ENCODE measurements at regions of chr17 and their contacts with region 1.

Region 1: DNA sequence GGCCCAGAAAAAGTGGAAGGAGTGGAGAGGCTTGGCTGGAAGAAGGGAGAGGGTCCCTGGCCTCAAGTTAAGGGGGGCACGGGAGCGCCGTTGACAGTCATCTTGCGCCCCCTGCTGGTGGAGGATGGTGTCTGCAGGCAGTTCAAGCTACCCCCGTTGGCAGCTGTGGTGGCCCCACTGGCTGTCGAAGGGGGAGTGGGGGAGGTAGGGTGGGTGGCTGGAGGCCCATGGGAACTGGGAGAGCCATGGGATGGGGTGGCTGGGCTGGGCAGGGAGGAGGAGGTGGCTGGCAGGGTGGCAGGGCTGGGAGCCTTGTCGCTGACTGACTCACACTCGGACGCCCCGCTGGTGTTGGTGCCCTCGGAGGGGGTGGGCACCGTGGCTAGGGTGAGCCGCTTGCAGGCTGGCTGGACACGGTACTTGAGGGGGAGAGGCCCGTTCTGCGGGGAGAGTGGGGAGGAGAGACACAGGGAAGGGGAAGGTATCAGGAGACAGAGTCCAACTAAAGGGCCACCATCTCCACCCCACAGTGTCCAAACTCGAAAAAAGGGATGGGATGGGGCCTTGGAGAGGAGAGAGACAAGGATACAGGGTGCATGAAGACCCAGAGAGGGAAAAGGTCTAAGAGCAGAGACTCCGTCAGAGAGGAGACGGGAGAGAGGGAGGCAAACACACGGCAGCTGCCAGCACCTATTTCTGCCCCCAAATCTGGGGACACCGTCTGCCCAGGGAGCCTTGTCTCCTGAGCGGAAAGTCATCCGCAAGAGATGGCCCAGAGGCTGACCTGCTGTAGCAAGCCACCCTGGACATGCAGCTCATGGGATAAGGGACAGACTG is 5.2 kb downstream of the CISD3 start:
- DNase-seq: peak; percentile 50 to 93
- ATAC-seq: peak in 1 of 2 experiments; percentile 32; a peak in 3 of 6 replicates
- H3K4me3 ChIP-seq: no peak overlapping the region
- H3K27ac ChIP-seq: peak overlapping the region in 1 of 2 experiments; percentile 34; a peak in 1 of 6 replicates
- H3K4me1 ChIP-seq: peaks cover 35% of the 10 kb centered on the region
- CTCF ChIP-seq: peak; percentile 96
- EP300 ChIP-seq: no peak
- POLR2A ChIP-seq: no peak
- RAD21 ChIP-seq: peak; percentile 71 to 78

Region 2: GRCh38 chr17:38557836-38558727 is 177.3 kb before region 1 on chr17:
- CTCF ChIA-PET with region 1: interaction called, 10 read pairs
- POLR2A ChIA-PET with region 1: no interaction called
- DNase-seq: peak; percentile 98 to 99
- ATAC-seq: peak; percentile 77 to 90
- H3K4me3 ChIP-seq: peak overlapping the region; percentile 44
- H3K27ac ChIP-seq: peak overlapping the region; percentile 68 to 88
- H3K4me1 ChIP-seq: peaks cover 16% of the 10 kb centered on the region
- CTCF ChIP-seq: peak; percentile 95
- EP300 ChIP-seq: no peak
- POLR2A ChIP-seq: no peak
- RAD21 ChIP-seq: peak; percentile 84 to 89

Region 3: GRCh38 chr17:38693700-38694329 is 41.6 kb before region 1 on chr17:
- CTCF ChIA-PET with region 1: interaction called, 51 read pairs
- POLR2A ChIA-PET with region 1: no interaction called
- DNase-seq: no peak
- ATAC-seq: peak; percentile 14 to 55; a peak in 3 of 6 replicates
- H3K4me3 ChIP-seq: no peak overlapping the region
- H3K27ac ChIP-seq: no peak overlapping the region
- H3K4me1 ChIP-seq: no peaks in the 10 kb centered on the region
- CTCF ChIP-seq: no peak
- EP300 ChIP-seq: no peak
- POLR2A ChIP-seq: no peak
- RAD21 ChIP-seq: no peak

Region 4: DNA sequence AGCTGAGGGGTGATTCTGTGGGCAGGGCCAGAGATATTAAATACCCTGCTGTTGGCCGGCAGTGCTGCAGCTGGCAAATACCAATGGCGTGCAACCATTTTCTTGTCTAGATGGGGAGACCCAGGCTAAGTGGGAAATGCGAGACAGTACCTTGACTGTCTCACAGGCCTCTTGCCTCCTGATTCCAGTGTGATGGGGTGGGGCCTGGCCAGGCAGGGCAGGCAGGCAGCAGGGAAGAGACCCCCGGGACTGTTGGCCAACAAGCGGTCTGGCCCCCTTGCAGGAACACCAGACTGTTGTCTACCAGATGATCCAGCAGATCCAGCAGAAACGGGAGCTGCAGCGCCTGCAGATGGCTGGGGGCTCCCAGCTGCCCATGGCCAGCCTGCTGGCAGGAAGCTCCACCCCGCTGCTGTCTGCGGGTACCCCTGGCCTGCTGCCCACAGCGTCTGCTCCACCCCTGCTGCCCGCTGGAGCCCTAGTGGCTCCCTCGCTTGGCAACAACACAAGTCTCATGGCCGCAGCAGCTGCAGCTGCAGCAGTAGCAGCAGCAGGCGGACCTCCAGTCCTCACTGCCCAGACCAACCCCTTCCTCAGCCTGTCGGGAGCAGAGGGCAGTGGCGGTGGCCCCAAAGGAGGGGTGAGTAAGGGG is 10.9 kb before region 1 on chr17:
- CTCF ChIA-PET with region 1: interaction called, 102 read pairs
- POLR2A ChIA-PET with region 1: no interaction called
- DNase-seq: no peak
- ATAC-seq: no peak
- H3K4me3 ChIP-seq: no peak overlapping the region
- H3K27ac ChIP-seq: no peak overlapping the region
- H3K4me1 ChIP-seq: peaks cover 9% of the 10 kb centered on the region; the same call in 2 of the 3 replicates
- CTCF ChIP-seq: no peak
- EP300 ChIP-seq: no peak
- POLR2A ChIP-seq: no peak
- RAD21 ChIP-seq: no peak

Region 5: GRCh38 chr17:38761612-38762011 is 26.2 kb after region 1 on chr17:
- CTCF ChIA-PET with region 1: interaction called, 15 read pairs
- POLR2A ChIA-PET with region 1: no interaction called
- DNase-seq: peak; percentile 76 to 81
- ATAC-seq: peak; percentile 77 to 86; a peak in 5 of 6 replicates
- H3K4me3 ChIP-seq: no peak overlapping the region
- H3K27ac ChIP-seq: no peak overlapping the region
- H3K4me1 ChIP-seq: no peaks in the 10 kb centered on the region
- CTCF ChIP-seq: peak; percentile 37; the same call in 2 of the 3 replicates
- EP300 ChIP-seq: no peak
- POLR2A ChIP-seq: no peak
- RAD21 ChIP-seq: peak; percentile 38 to 67

Region 6: GRCh38 chr17:38922538-38923297 is 187.3 kb after region 1 on chr17:
- CTCF ChIA-PET with region 1: no interaction called
- POLR2A ChIA-PET with region 1: no interaction called
- DNase-seq: no peak
- ATAC-seq: peak; percentile 59 to 63
- H3K4me3 ChIP-seq: no peak overlapping the region
- H3K27ac ChIP-seq: peak overlapping the region in 1 of 2 experiments; percentile 45; a peak in 3 of 6 replicates
- H3K4me1 ChIP-seq: peaks cover 11% of the 10 kb centered on the region; the same call in 1 of the 3 replicates
- CTCF ChIP-seq: no peak
- EP300 ChIP-seq: no peak
- POLR2A ChIP-seq: no peak
- RAD21 ChIP-seq: no peak

Measured in A549 (cell line).